ENCODE measurements at regions of chr1 and their contacts with region 1.

Region 1: DNA sequence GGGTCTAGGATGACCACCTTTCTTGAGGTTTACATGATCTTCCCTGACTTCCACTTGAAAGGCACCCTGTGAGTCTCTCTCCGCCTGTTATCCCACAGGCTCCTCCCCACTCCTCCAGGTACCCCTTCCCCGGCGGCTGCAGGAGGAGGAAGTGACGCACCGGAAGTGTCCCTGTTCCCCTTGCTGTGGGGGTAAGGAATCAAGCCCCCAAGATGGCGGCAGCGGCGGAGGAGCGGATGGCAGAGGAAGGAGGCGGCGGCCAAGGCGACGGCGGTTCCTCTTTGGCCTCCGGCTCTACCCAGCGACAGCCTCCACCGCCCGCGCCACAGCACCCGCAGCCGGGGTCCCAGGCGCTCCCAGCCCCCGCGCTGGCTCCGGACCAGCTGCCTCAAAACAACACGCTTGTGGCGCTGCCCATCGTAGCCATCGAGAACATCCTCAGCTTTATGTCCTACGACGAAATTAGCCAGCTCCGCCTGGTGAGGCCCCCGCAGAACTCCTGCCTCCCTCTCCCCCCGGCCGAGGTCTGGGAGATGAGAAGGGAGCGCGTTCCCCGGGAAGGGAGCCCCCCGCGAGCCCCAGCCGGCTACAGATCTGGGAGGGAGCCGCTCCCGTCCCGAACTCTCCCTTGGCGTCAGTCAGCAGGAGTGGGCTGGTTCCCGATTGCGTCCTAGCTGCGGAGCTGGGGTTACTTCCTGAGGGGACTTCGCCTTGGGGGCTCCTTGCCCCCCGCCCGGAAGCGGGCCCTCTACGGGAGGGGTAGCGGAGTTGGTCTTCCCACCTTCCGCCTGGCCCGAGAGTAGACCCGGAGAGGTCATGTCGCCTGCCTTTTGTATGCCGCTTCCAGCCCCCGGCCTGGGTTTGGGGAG is at the start of gene FBXO28:
- DNase-seq: peak; percentile 97
- H3K4me3 ChIP-seq: peak within 1 kb of the TSS; percentile 86
- H3K27ac ChIP-seq: peak within 1 kb of the TSS; percentile 92
- H3K4me1 ChIP-seq: no peaks in the 10 kb centered on the region
- H3K27me3 ChIP-seq: no peaks in the 10 kb centered on the region
- CTCF ChIP-seq: no peak
- total RNA-seq, gene FBXO28: 35.1 to 42.7 TPM

Region 2: DNA sequence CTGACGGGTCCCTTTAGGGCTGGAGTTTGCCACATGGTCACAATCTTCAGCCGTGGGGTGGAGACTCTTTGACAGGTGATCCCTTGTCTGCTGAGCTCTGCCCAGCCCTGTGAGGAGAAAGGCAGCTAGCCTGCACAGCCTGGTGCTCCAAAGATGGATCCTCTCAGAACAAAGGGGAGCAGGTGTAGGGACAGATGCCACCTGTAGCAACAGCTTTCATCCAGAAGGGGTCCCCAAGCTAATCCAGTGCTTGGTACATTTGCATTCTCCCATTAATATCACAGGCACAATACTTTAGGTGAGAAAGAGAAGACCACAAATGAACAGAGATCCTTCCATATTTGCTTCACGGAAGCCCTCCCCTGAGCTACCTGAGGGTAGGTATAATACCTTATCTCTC is 627.8 kb before region 1 on chr1:
- intact Hi-C with region 1: no loop called
- DNase-seq: no peak
- H3K4me3 ChIP-seq: no peak overlapping the region
- H3K27ac ChIP-seq: no peak overlapping the region
- H3K4me1 ChIP-seq: no peaks in the 10 kb centered on the region
- H3K27me3 ChIP-seq: no peaks in the 10 kb centered on the region
- CTCF ChIP-seq: no peak

Region 3: DNA sequence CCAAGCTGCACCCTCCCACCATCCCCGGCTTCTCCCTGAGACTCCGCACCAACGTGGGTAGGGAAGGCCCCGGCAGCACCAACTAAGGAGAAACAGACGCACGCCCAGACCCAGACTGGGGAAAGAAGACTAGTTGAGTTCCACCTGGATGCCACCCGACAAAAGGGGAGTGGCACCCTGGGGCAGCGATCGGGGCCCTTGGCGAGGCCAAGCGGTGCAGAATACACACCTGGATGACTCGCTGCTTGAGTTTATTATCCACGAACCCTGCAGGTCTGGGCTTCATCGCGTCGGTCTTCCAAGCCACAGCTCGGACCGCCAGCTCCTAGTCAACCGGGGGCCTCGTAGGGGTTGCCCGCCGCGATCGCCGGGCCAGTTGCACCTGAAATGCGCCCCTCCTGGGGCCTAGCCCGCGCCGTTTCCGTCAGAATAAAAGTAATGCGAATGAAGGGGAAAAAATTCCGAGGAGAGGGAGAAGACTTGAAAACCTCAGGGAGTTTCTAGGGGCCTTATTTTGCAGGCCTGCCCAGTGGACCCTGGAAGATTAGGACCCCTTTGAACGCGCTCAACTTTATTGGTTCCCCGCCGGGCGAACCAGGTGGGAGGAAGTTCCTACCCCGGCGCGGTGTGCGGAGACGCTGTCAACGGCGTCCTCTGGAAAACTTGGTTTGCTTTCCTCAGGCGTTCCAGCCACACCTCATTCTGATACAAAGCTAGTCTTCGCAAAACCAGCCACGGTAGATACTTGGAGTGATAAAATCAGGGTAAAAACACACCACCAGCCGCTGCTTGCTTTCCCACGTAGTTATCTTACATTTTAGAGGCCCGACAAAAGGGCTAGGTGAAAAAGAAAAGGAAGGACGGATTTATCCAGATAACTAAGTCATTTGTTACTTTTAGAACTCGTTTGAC is 215.9 kb after region 1 on chr1 and contains the start of gene NVL:
- intact Hi-C with region 1: loop called (anchors 2 kb)
- DNase-seq: peak; percentile 89
- H3K4me3 ChIP-seq: peak within 1 kb of the TSS; percentile 90
- H3K27ac ChIP-seq: peak within 1 kb of the TSS; percentile 93
- H3K4me1 ChIP-seq: peaks cover 10% of the 10 kb centered on the region
- H3K27me3 ChIP-seq: no peaks in the 10 kb centered on the region
- CTCF ChIP-seq: no peak
- total RNA-seq, gene NVL: 39.4 to 51.5 TPM

Region 4: DNA sequence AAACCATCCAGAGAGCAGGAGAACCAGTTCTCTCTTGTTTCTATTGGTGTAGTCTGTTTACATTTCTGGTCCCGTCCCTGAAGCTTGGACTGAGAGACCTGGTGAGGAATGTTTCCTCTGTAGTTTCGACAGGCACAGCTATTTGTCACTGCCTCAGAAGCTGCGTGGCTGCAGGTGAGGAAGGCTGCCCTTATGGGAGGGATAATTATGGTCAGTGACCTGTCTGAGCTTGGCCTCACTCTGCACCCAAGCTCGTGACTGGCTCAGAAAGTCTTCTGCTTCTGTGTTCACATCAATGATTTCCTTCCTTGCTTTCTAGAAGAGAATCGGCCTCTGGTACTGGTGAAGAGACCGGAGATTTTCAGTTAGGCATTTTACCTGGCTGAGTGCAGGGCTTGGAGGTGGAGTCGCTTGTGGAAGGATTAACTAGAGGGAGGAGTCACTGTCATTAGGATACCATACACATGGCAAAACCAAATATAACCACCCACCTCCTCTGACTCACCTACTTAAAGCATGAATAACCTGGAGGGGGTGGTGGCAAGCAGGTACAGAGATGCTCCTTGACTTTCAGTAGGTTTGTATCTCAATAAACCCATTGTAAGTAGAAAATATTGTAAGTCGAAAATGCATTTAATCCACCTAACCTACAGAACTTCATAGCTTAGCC is 340.4 kb after region 1 on chr1:
- intact Hi-C with region 1: loop called (anchors 5 kb)
- DNase-seq: peak; percentile 80
- H3K4me3 ChIP-seq: peak overlapping the region; percentile 2
- H3K27ac ChIP-seq: peak overlapping the region; percentile 59
- H3K4me1 ChIP-seq: peaks cover 5% of the 10 kb centered on the region
- H3K27me3 ChIP-seq: no peaks in the 10 kb centered on the region
- CTCF ChIP-seq: no peak

Measured in colonic mucosa (tissue), 4 donors.